PC-9 (cell line): ENCODE measurements at regions of chr4 and their contacts with region 1.

Region 1: GRCh38 chr4:123661080-123661737 is 264.6 kb downstream of the SPRY1 start:
- DNase-seq: no peak
- H3K4me3 ChIP-seq: no peak overlapping the region
- H3K27ac ChIP-seq: no peak overlapping the region
- H3K4me1 ChIP-seq: no peaks in the 10 kb centered on the region
- H3K27me3 ChIP-seq: no peaks in the 10 kb centered on the region
- CTCF ChIP-seq: peak; percentile 89

Region 2: DNA sequence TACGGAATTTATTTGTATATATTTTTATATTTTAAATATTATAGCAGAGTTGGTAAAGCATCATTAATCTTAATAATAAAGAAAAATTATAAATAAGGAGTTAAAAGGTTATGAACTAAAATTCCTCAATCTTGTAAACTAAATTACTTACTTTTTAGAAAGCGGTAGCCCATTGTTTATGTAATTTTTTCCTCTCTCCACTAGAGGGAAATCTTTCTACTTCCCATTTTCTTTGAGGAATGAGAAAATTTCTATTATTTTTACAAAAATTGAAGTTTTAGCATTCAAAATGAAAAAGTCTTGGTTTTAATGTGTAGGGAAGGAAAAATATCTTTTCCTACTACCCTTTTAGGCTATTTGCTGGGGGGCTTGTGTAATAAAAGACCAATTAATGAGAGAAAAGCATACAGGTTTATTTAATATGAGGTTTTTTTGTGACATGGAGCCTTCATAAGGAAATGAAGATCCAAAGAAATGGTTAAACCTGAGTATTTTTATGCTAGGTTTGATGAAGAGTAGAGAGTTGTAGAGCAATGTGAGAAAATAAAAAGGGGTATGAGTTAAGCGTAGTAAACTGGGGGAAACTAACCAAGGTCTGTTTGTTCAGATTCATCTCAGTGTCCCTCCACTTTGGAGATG is 1351.1 kb before region 1 on chr4:
- CTCF ChIA-PET with region 1: no interaction called
- POLR2A ChIA-PET with region 1: no interaction called
- intact Hi-C with region 1: no loop called
- DNase-seq: no peak
- H3K4me3 ChIP-seq: no peak overlapping the region
- H3K27ac ChIP-seq: no peak overlapping the region
- H3K4me1 ChIP-seq: 0 out of 2 replicates have a peak, but pooled peaks cover 3% of the 10 kb centered on the region
- H3K27me3 ChIP-seq: no peaks in the 10 kb centered on the region
- CTCF ChIP-seq: peak; percentile 78

Region 3: GRCh38 chr4:123127218-123127617 is 534.0 kb before region 1 on chr4:
- CTCF ChIA-PET with region 1: no interaction called
- POLR2A ChIA-PET with region 1: no interaction called
- intact Hi-C with region 1: loop called (anchors 2 kb)
- DNase-seq: peak in 1 of 2 experiments; percentile 30
- H3K4me3 ChIP-seq: no peak overlapping the region
- H3K27ac ChIP-seq: no peak overlapping the region
- H3K4me1 ChIP-seq: peaks cover 4% of the 10 kb centered on the region; the same call in 1 of the 2 replicates
- H3K27me3 ChIP-seq: no peaks in the 10 kb centered on the region
- CTCF ChIP-seq: peak; percentile 62

Region 4: DNA sequence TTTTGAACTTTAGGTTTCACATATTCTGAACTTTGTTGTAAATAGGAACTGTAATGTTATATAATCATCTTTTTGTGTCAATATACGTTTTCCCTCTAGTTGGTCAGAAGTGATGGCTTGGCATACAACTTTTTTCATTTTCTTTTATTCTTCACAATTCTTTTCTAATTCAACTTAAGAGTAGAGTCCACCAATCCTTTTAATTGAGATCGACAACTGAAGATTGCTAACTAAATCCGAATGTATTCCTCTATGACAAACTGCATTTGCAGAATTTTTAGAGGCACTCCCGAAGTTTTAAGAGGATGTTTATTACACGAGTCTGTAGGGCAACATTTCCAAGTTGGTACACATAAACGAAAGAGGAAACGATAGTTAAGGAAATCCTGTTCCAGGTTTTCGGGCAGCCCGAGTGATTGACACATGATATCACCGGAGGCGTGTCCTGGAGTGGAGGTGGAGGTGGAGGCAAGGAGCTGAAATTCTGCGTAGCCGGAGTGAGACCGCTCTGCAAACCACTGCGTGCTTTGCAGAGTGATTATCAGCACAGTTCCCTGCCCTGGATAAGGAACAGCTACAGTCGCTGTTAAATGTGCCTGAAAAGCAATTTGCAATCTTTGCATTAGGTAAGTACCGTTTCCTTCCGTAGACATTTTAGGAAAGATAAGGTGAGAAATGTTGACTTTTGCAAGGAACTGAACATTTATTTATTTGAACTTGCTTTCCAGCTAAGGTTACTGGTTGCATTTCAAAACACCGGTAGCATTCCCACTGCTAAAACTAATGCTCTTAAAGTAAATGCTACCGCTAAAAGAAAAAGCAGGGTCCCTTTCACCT is 264.7 kb before region 1 on chr4 and contains the start of gene SPRY1:
- CTCF ChIA-PET with region 1: interaction called, 8 read pairs
- POLR2A ChIA-PET with region 1: no interaction called
- intact Hi-C with region 1: loop called (anchors 1 kb)
- DNase-seq: peak; percentile 83 to 92
- H3K4me3 ChIP-seq: peak within 1 kb of the TSS; percentile 86
- H3K27ac ChIP-seq: peak within 1 kb of the TSS; percentile 83
- H3K4me1 ChIP-seq: peaks cover 17% of the 10 kb centered on the region
- H3K27me3 ChIP-seq: no peaks in the 10 kb centered on the region
- CTCF ChIP-seq: no peak
- total RNA-seq, gene SPRY1: 13.1 and 18.3 TPM in 2 replicates

Region 5: GRCh38 chr4:123564758-123565346 is 96.4 kb before region 1 on chr4:
- CTCF ChIA-PET with region 1: interaction called, 3 read pairs
- POLR2A ChIA-PET with region 1: no interaction called
- intact Hi-C with region 1: loop called (anchors 1 kb)
- DNase-seq: peak; percentile 48 to 74
- H3K4me3 ChIP-seq: no peak overlapping the region
- H3K27ac ChIP-seq: no peak overlapping the region
- H3K4me1 ChIP-seq: peaks cover 5% of the 10 kb centered on the region; the same call in 1 of the 2 replicates
- H3K27me3 ChIP-seq: no peaks in the 10 kb centered on the region
- CTCF ChIP-seq: peak; percentile 76

Region 6: DNA sequence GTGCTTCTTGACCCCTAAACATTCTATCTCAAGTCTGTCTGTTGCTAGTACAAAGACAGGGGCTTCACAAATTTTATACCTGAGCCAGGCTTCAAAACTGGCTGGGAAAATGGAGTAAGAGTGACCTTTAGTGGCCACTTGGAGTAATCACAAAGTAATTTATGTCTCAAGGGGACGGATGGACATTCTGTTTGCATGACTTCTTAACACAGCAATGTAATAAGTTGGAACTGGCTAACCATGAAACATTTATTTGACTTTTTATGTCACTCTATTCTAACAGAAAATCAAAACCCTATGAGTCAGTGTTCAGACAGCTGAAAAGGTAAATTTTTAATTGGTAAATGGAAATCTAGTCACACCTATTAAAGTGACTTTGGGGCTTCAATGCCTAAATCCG is 450.7 kb after region 1 on chr4:
- CTCF ChIA-PET with region 1: no interaction called
- POLR2A ChIA-PET with region 1: no interaction called
- intact Hi-C with region 1: loop called (anchors 2 kb)
- DNase-seq: peak in 1 of 2 experiments; percentile 64
- H3K4me3 ChIP-seq: no peak overlapping the region
- H3K27ac ChIP-seq: no peak overlapping the region
- H3K4me1 ChIP-seq: no peaks in the 10 kb centered on the region
- H3K27me3 ChIP-seq: no peaks in the 10 kb centered on the region
- CTCF ChIP-seq: peak; percentile 91

Region 7: GRCh38 chr4:124322234-124323065 is 661.2 kb after region 1 on chr4:
- CTCF ChIA-PET with region 1: no interaction called
- POLR2A ChIA-PET with region 1: no interaction called
- intact Hi-C with region 1: loop called (anchors 5 kb)
- DNase-seq: no peak
- H3K4me3 ChIP-seq: no peak overlapping the region
- H3K27ac ChIP-seq: no peak overlapping the region
- H3K4me1 ChIP-seq: no peaks in the 10 kb centered on the region
- H3K27me3 ChIP-seq: no peaks in the 10 kb centered on the region
- CTCF ChIP-seq: peak; percentile 82